Prostate gland (tissue), 2 donors: ENCODE measurements at regions of chr10 and their contacts with region 1.

Region 1: DNA sequence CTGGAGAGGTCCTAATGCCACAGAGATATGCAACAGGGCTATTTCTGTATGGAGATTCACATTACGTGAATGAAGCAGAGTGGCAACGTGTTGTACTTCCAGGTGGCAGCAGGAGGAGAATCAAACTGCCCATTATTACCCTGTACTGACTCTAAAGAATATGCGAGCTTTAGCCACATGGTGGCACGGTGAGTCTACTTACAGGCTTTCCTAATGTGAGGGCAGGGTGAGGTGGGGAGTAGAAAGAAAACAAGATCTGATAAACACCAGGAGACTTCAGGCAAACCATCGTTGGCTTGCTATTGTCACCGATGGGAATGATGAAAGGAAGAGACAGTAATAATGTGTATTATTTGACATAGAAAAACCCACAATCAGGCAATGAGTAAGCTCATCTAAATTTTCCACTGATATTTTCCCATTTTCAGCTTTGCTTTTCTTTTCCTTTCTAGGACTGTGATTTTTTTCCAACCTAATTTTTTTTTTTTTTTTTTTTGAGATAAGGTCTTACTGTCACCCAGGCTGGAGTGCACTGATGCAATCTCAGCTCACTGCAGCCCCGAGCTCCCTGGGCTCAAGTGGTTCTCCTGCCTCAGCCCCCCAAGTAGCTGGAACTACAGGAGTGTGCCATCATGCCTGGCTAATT is 164.3 kb downstream of the BTAF1 start:
- DNase-seq: peak; percentile 79
- H3K4me3 ChIP-seq: no peak overlapping the region
- H3K27ac ChIP-seq: peak overlapping the region; percentile 20 to 43
- H3K4me1 ChIP-seq: no peaks in the 10 kb centered on the region
- H3K27me3 ChIP-seq: no peaks in the 10 kb centered on the region
- CTCF ChIP-seq: peak; percentile 58 to 93 (median 82)
- POLR2A ChIP-seq: no peak

Region 2: DNA sequence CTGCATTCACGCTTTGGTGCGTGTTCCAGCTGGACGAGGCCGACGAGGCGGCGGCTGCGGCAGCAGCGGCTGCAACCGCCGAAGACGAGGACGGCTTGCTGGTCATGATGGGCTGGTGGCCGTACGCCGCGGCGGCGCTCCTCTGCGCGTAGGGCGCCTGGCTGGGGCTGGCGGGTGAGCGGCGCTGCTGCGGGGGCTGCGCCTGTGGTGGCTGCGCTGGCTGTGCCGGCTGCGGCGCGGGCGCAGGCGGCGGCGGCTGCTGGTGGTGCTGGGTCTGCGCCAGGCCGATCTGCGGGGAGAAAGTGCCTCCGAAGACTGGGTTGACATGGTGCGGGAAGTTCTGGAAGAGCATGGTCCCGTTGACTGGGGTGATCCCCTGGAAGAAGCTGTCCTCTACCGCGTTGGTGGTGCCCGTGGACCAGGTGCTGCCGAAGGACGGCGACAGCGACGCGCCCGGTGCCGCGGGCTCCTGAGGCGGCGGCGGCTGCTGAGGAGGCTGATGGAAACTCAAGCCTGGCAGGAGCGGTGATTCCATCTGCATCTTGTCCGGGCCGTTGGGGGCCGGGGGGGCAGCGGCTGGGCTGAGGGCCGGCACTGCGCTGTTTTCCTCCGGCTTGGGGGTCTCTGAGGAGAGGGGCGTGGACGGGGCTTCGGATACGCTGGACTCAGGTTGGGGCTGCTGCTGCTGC is 151.9 kb after region 1 on chr10:
- intact Hi-C with region 1: loop called (anchors 5 kb)
- DNase-seq: peak; percentile 19
- H3K4me3 ChIP-seq: peak overlapping the region; percentile 63 to 74
- H3K27ac ChIP-seq: peak overlapping the region; percentile 87 to 92
- H3K4me1 ChIP-seq: peaks cover 3% of the 10 kb centered on the region
- H3K27me3 ChIP-seq: no peaks in the 10 kb centered on the region
- CTCF ChIP-seq: no peak
- POLR2A ChIP-seq: no peak

Region 3: GRCh38 chr10:92290837-92291615 is 203.2 kb after region 1 on chr10 and contains the starts of genes CPEB3 and MARCHF5:
- intact Hi-C with region 1: loop called (anchors 2 kb)
- DNase-seq: peak; percentile 97
- H3K4me3 ChIP-seq: peak within 1 kb of the TSS; percentile 78 to 88
- H3K27ac ChIP-seq: peak within 1 kb of the TSS; percentile 97 to 99
- H3K4me1 ChIP-seq: no peaks in the 10 kb centered on the region
- H3K27me3 ChIP-seq: no peaks in the 10 kb centered on the region
- CTCF ChIP-seq: peak; percentile 49 to 93 (median 73)
- POLR2A ChIP-seq: peak; percentile 88
- total RNA-seq, gene CPEB3: 10.6 to 16.9 TPM
- total RNA-seq, gene MARCHF5: 20.8 TPM

Region 4: DNA sequence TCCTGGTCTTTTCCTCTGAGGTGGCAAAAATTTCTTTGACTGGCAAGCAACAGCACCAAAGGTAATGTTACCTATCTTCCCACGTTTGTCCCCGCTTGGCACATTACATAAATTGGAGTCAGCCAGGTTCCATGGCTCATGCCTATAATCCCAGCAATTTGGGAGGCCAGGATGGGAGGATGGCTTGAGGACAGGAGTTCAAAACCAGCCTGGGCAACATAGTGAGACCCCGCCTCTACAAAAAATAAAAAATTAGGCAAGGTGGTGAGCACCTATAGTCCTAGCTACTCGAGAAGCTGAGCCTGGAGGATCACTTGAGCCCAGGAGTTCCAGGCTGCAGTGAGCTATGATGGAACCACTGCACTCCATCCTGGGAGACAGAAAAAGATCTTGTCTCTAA is 346.5 kb after region 1 on chr10:
- intact Hi-C with region 1: loop called (anchors 2 kb)
- DNase-seq: no peak
- H3K4me3 ChIP-seq: no peak overlapping the region
- H3K27ac ChIP-seq: no peak overlapping the region
- H3K4me1 ChIP-seq: no peaks in the 10 kb centered on the region
- H3K27me3 ChIP-seq: no peaks in the 10 kb centered on the region
- CTCF ChIP-seq: no peak
- POLR2A ChIP-seq: no peak

Region 5: GRCh38 chr10:92742331-92743228 is 654.7 kb after region 1 on chr10:
- intact Hi-C with region 1: no loop called
- DNase-seq: no peak
- H3K4me3 ChIP-seq: no peak overlapping the region
- H3K27ac ChIP-seq: no peak overlapping the region
- H3K4me1 ChIP-seq: no peaks in the 10 kb centered on the region
- H3K27me3 ChIP-seq: no peaks in the 10 kb centered on the region
- CTCF ChIP-seq: no peak
- POLR2A ChIP-seq: no peak